Left ventricle myocardium superior (tissue), 1 donor: ENCODE measurements at regions of chr6 and their contacts with region 1.

Region 1: DNA sequence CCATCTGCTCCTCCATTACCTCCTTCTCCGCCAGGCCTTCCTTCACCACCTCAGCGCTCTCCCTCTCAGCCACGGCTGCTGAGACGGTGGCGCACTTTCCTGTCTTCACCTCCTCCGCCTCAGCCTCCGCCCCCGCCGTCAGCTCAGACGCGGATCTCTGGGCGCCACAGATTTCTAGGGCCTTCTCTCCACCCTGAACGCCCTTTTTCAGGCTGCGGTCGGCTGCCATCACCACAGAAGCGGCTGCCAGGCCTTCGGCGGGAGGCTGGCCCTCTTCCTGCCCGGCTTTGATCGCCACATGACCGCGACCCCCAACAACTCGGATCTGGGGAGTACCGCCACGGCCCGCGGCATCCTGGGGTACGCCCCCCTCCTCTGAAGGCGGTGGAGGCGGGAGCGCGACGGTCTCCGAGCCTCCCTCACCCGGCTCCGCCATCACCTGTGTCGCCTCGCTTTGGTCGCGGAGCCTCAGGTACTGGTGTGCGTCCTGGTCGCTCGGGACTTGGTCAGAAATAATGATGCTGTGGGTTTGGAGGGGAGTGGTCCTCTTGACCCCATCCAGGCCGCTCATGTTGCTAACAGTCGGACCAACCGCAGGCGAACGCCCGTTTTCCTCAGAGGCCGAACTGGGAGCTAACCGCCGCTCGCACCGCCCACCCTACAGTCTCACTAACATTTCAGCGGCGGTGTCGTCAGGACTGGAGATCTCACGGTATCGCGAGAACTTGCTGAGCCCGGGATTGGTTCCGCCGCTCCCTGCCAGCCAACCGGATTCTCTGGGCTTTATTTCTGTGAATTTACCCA is at the start of gene TSPYL1:
- DNase-seq: peak; percentile 96
- ATAC-seq: peak; percentile 97
- total RNA-seq, gene TSPYL1: 96.8 TPM

Region 2: DNA sequence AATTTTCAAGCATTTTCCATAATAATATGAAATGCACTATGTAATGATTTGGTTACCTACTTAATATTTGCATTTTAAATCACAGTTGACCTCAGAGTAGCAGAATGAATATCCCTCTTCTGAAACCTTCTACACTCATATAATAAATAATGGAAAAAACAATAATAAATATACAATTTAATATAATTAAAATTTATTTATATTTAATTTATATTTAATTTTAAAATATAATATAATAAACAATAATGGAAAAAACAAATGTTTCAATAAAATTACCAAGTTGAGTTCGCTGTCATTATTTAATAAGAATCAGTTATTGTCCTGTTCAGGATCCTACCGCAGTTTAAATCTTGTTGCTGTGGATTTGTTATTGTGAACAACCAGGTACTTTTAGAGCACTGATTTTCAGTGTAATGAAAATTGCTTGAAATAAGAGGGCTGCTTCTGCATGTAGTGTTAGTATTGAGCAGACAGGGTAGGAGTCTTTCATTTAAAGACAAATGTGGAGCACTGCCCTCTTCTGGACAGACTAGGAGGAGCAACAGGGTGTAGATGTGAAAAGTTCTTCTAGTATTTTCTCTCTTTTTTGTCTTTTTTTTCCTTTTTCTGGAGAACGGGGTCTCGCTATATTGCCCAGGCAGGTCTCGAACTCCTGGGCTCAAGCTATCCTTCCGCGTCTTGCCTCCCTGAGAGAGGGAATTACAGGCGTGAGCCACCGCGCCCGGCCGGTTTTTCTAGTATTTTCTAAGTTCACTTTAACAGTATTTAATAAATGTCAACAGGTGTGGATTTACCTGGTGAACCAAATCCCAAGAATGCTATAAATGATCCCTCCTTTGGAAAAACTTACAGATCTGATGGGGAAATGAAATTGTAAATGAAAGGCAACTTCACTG is 252.5 kb after region 1 on chr6:
- intact Hi-C with region 1: loop called (anchors 10 kb)
- DNase-seq: peak; percentile 30
- ATAC-seq: peak; percentile 80